HCT116 (cell line): ENCODE measurements at regions of chr20 and their contacts with region 1.

Region 1: GRCh38 chr20:25310268-25310920 is 62.5 kb downstream of the PYGB start:
- DNase-seq: peak; percentile 73
- ATAC-seq: peak; percentile 76
- H3K4me3 ChIP-seq: peak overlapping the region; percentile 25 to 53
- H3K27ac ChIP-seq: peak overlapping the region; percentile 79
- H3K4me1 ChIP-seq: peaks cover 37 to 43% of the 10 kb centered on the region in 2 experiments
- H3K27me3 ChIP-seq: no peaks in the 10 kb centered on the region
- CTCF ChIP-seq: peak; percentile 50 to 64 (median 63); a peak in 5 of 6 replicates
- POLR2A ChIP-seq: no peak
- RAD21 ChIP-seq: peak; percentile 83

Region 2: DNA sequence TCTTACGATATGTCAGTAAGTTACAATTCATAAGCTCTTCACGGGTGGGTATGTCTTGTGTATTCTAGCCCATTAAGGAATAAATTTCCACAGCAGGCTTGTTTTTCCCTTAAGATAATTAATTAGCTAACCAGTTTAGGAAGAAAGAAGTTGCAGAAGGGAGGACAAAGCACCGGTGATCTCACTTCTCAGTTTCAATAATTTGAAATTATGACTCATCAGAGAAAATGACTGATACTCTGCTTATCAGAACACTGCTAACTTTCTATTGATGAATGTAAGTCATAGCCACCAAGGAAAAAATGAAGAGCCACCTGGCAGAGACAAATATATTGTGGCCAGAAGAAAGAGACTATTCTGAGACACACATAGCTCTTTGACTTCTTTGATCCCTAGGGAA is 149.9 kb before region 1 on chr20:
- CTCF ChIA-PET with region 1: no interaction called
- POLR2A ChIA-PET with region 1: no interaction called
- RAD21 ChIA-PET with region 1: no interaction called
- intact Hi-C with region 1: no loop called
- DNase-seq: no peak
- ATAC-seq: no peak
- H3K4me3 ChIP-seq: no peak overlapping the region
- H3K27ac ChIP-seq: no peak overlapping the region
- H3K4me1 ChIP-seq: no peaks in the 10 kb centered on the region
- H3K27me3 ChIP-seq: no peaks in the 10 kb centered on the region; the same call in 1 of the 2 replicates
- CTCF ChIP-seq: no peak
- POLR2A ChIP-seq: no peak
- RAD21 ChIP-seq: no peak

Region 3: GRCh38 chr20:25254986-25255680 is 55.3 kb before region 1 on chr20:
- CTCF ChIA-PET with region 1: no interaction called
- POLR2A ChIA-PET with region 1: no interaction called
- RAD21 ChIA-PET with region 1: no interaction called
- intact Hi-C with region 1: loop called (anchors 10 kb)
- DNase-seq: no peak
- ATAC-seq: peak; percentile 66
- H3K4me3 ChIP-seq: no peak overlapping the region
- H3K27ac ChIP-seq: no peak overlapping the region
- H3K4me1 ChIP-seq: peaks cover 29 to 32% of the 10 kb centered on the region in 2 experiments
- H3K27me3 ChIP-seq: no peaks in the 10 kb centered on the region
- CTCF ChIP-seq: no peak
- POLR2A ChIP-seq: no peak
- RAD21 ChIP-seq: no peak

Region 4: GRCh38 chr20:25390538-25391528 is 80.4 kb after region 1 on chr20 and contains the start of gene ABHD12:
- CTCF ChIA-PET with region 1: no interaction called
- POLR2A ChIA-PET with region 1: interaction called, 3 read pairs
- RAD21 ChIA-PET with region 1: no interaction called
- intact Hi-C with region 1: loop called (anchors 2 kb)
- DNase-seq: peak; percentile 81
- ATAC-seq: peak; percentile 89
- H3K4me3 ChIP-seq: peak within 1 kb of the TSS; percentile 81 to 96
- H3K27ac ChIP-seq: peak within 1 kb of the TSS; percentile 96
- H3K4me1 ChIP-seq: peaks cover 9 to 13% of the 10 kb centered on the region in 2 experiments; a peak in 3 of 4 replicates
- H3K27me3 ChIP-seq: no peaks in the 10 kb centered on the region
- CTCF ChIP-seq: no peak
- POLR2A ChIP-seq: peak; percentile 43
- RAD21 ChIP-seq: 0 out of 2 replicates have a peak, but pooled peaks have one; percentile 19
- total RNA-seq, gene ABHD12: 31.7 TPM

Region 5: GRCh38 chr20:25399037-25399430 is 88.6 kb after region 1 on chr20:
- CTCF ChIA-PET with region 1: interaction called, 22 read pairs
- POLR2A ChIA-PET with region 1: no interaction called
- RAD21 ChIA-PET with region 1: interaction called, 3 to 6 read pairs
- intact Hi-C with region 1: no loop called
- DNase-seq: peak; percentile 68
- ATAC-seq: peak; percentile 96
- H3K4me3 ChIP-seq: no peak overlapping the region
- H3K27ac ChIP-seq: no peak overlapping the region
- H3K4me1 ChIP-seq: 0 out of 4 replicates have a peak, but pooled peaks cover 0 to 2% of the 10 kb centered on the region in 2 experiments
- H3K27me3 ChIP-seq: no peaks in the 10 kb centered on the region
- CTCF ChIP-seq: peak; percentile 49 to 88 (median 67)
- POLR2A ChIP-seq: no peak
- RAD21 ChIP-seq: peak; percentile 84

Region 6: DNA sequence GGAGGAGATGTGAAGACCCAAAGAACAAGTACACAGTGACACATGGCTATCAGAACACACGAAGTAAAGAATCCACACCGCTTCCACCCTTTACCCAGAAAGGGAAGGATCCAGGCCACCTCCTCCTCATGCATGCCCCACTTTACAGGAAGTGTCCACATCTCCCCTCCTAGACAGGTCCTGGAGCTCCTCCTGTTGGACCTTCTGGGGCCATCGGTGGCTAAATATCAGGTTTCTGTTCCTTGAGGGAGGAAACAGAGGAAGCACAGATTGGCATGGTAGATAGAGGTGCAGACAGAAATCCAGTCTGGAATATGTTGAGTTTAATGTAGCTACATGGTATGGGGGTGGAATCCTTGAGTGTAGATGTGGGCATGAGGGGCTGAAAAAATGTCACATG is 264.0 kb after region 1 on chr20:
- CTCF ChIA-PET with region 1: no interaction called
- POLR2A ChIA-PET with region 1: no interaction called
- RAD21 ChIA-PET with region 1: no interaction called
- intact Hi-C with region 1: loop called (anchors 10 kb)
- DNase-seq: no peak
- ATAC-seq: peak; percentile 79
- H3K4me3 ChIP-seq: no peak overlapping the region
- H3K27ac ChIP-seq: no peak overlapping the region
- H3K4me1 ChIP-seq: peaks cover 0 to 4% of the 10 kb centered on the region in 2 experiments; a peak in 1 of 4 replicates
- H3K27me3 ChIP-seq: no peaks in the 10 kb centered on the region
- CTCF ChIP-seq: peak; percentile 18 to 42 (median 39); a peak in 4 of 6 replicates
- POLR2A ChIP-seq: no peak
- RAD21 ChIP-seq: peak; percentile 58